Psoas muscle (tissue), 8 donors: ENCODE measurements at regions of chr7 and their contacts with region 1.

Region 1: DNA sequence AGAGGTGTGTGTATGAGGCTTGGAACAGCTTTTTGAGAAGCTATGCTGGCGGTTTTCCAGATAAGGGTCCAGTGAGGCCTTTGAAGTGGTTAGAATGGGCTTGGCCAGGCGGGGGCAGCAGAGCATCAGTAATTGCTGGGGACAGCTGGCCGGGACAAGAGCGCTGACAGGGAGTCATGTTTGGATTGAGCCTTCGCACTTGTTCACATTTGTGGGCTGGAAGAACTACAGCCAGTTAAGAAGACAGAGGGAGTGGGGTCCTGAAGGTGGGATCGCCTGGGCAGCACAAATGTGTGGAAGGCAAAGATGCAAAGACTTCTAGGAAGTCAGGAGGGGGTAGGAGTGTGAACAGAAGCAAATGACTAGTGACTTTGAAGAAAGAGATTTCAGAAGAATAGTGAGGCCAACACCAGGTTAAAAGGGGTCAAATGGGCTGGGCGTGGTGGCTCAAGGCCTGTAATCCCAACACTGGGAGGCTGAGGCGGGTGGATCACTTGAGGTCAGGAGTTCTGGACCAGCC is 12.7 kb upstream of the SDHAF3 start:
- DNase-seq: peak; percentile 84 to 92
- ATAC-seq: peak; percentile 89 to 98 (median 94)
- H3K4me3 ChIP-seq: no peak overlapping the region
- H3K27ac ChIP-seq: no peak overlapping the region
- H3K4me1 ChIP-seq: no peaks in the 10 kb centered on the region
- H3K27me3 ChIP-seq: no peaks in the 10 kb centered on the region
- CTCF ChIP-seq: peak; percentile 81

Region 2: GRCh38 chr7:97179454-97180104 is 74.8 kb after region 1 on chr7:
- intact Hi-C with region 1: loop called (anchors 1 to 2 kb)
- DNase-seq: no peak
- ATAC-seq: peak in 2 of 4 donors; percentile 72 to 73
- H3K4me3 ChIP-seq: no peak overlapping the region
- H3K27ac ChIP-seq: no peak overlapping the region
- H3K4me1 ChIP-seq: no peaks in the 10 kb centered on the region
- H3K27me3 ChIP-seq: no peaks in the 10 kb centered on the region
- CTCF ChIP-seq: peak; percentile 73

Region 3: GRCh38 chr7:97480772-97481390 is 376.1 kb after region 1 on chr7:
- intact Hi-C with region 1: no loop called
- DNase-seq: no peak
- ATAC-seq: no peak
- H3K4me3 ChIP-seq: no peak overlapping the region
- H3K27ac ChIP-seq: no peak overlapping the region
- H3K4me1 ChIP-seq: no peaks in the 10 kb centered on the region
- H3K27me3 ChIP-seq: no peaks in the 10 kb centered on the region
- CTCF ChIP-seq: no peak

Region 4: DNA sequence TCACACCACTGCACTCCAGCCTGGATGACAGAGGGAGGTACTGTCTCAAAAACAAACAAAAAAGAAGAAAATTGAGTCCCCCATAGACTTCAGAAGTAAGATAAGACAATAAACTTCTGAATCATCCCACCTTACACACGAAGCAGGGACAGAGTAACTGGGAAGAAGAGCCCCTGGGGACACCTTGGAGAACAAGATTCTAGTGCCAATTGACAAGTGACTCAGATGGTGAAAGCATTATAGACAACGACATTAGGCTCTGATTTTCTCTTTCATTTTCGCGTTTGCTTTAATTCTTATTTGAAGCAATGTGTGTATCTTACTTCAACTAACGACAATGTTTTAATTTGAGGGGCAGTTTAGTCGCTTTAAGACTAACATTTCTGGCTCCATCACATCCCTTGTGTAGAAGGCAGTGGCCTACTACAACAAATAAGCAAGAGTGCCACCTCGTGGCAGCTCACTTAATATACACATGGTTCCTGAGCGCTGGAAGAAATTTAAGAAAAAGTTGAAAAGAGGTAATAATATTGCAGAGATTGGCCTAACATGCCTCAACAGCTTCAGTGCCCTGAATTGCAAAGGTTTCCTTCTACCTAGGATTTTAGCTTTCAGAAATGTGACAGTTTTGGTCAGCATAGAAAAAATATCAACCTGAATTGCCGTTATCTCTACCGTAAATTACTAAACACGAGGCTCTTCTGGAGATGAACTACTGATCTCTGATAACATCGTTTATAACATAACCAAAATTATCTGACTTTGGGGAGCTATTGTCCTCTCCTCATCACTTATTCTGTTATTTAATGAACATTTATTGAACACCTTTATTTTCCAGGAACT is 730.7 kb after region 1 on chr7:
- intact Hi-C with region 1: loop called (anchors 2 kb)
- DNase-seq: peak; percentile 30 to 58
- ATAC-seq: peak in 1 of 4 donors; percentile 71
- H3K4me3 ChIP-seq: no peak overlapping the region
- H3K27ac ChIP-seq: no peak overlapping the region
- H3K4me1 ChIP-seq: no peaks in the 10 kb centered on the region
- H3K27me3 ChIP-seq: peaks cover 0 to 1% (median 0%) of the 10 kb centered on the region in 3 donors
- CTCF ChIP-seq: peak; percentile 58